A549 (cell line): ENCODE measurements at regions of chr17 and their contacts with region 1.

Region 1: DNA sequence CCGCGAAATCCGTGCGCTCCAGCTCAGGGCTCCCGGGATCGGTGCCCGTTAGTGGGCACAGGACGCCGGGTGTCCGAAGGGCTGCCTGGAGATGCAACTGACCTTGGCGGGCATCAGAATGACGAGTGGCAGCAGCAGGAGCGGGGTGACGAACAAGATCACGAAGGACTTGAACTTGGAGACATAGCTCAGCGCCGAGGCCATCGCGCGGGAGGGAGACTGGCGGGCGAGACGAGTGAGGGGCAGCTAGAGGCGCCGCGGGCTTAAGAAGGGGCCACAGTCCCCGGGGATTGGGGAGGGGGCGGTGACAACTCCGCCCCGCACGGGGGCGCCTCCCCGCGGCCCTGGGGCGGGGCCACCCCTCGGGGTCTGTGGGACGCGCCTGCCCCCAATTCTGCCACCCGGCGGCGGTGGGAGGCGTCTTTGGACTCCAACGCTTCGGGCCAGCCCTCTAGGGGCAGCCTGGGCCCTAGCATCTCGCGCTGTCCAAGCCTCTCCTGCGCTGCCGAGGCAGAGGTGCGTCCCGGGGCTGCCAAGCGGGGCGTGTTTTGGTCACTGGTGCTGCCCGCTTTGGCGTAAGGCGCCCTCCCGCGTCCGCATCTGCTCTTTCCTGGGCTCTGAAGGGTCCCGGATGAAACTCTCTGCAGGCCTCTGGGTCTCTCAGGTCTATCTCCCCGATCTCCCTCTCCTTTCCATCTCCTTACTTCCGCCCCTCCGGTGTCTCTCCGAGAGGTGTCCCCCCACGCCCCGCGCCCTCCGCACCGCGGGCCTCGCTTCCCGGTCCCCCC is at the start of gene SLC13A5:
- DNase-seq: peak; percentile 80 to 85
- ATAC-seq: peak; percentile 91 to 98
- H3K4me3 ChIP-seq: peak within 1 kb of the TSS; percentile 58
- H3K27ac ChIP-seq: peak within 1 kb of the TSS; percentile 54 to 74
- H3K4me1 ChIP-seq: 0 out of 3 replicates have a peak, but pooled peaks cover 3% of the 10 kb centered on the region
- CTCF ChIP-seq: peak; percentile 60
- EP300 ChIP-seq: no peak
- POLR2A ChIP-seq: no peak
- RAD21 ChIP-seq: peak in 1 of 2 experiments; percentile 37; a peak in 3 of 5 replicates
- polyA plus RNA-seq, gene SLC13A5: 0.26 and 0.30 TPM in 2 replicates

Region 2: DNA sequence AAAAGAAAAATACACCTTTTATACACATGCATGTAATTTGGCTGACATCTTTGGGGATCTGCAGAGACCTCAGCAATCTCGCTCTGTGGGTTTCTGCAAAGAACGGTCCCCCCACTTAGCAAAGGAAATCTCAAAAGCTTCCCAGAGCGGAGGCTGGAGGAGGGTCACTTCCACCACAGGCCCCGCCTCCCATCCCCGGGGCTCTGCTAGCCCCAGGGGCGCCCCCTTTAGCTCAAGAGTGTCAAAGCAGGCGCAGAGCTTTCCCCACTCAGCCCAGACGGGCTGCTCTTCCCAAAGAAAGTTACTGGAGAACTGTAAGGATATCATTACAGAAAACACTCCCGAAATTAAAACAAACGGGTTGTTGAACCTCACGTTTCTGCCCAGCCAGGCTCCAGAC is 11.6 kb before region 1 on chr17:
- CTCF ChIA-PET with region 1: interaction called, 31 read pairs
- POLR2A ChIA-PET with region 1: interaction called, 3 read pairs
- DNase-seq: peak; percentile 50 to 72
- ATAC-seq: peak; percentile 73 to 94; a peak in 5 of 6 replicates
- H3K4me3 ChIP-seq: no peak overlapping the region
- H3K27ac ChIP-seq: no peak overlapping the region
- H3K4me1 ChIP-seq: no peaks in the 10 kb centered on the region
- CTCF ChIP-seq: peak; percentile 32; the same call in 2 of the 3 replicates
- EP300 ChIP-seq: no peak
- POLR2A ChIP-seq: no peak
- RAD21 ChIP-seq: peak in 1 of 2 experiments; percentile 22; a peak in 1 of 5 replicates

Region 3: DNA sequence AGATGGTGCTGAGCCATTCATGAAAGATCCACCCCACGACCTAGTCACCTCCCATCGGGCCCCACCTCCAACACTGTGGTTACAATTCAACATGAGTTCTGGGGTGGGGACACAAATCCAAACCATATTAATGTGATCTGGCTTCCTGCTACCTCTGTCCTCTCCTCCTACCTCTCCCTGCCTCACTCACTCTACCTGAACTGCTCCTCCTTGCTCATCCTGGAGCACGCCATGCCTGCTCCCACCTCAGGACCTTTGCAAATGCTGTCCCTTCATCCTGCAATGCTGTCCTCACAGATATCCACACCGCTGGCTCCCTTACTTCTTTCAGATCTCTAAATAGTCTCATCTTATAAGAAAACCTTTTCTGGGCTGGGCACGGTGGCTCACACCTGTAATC is 10.7 kb after region 1 on chr17:
- CTCF ChIA-PET with region 1: no interaction called
- POLR2A ChIA-PET with region 1: no interaction called
- DNase-seq: no peak
- ATAC-seq: no peak
- H3K4me3 ChIP-seq: no peak overlapping the region
- H3K27ac ChIP-seq: no peak overlapping the region
- H3K4me1 ChIP-seq: no peaks in the 10 kb centered on the region
- CTCF ChIP-seq: no peak
- EP300 ChIP-seq: no peak
- POLR2A ChIP-seq: no peak
- RAD21 ChIP-seq: no peak

Region 4: GRCh38 chr17:6831661-6832263 is 118.4 kb after region 1 on chr17 and contains the start of gene TEKT1:
- CTCF ChIA-PET with region 1: no interaction called
- POLR2A ChIA-PET with region 1: no interaction called
- DNase-seq: peak; percentile 81 to 86
- ATAC-seq: peak; percentile 93 to 95
- H3K4me3 ChIP-seq: peak within 1 kb of the TSS; percentile 47
- H3K27ac ChIP-seq: peak within 1 kb of the TSS in 1 of 2 experiments; percentile 50; a peak in 2 of 6 replicates
- H3K4me1 ChIP-seq: peaks cover 11% of the 10 kb centered on the region; the same call in 2 of the 3 replicates
- CTCF ChIP-seq: no peak
- EP300 ChIP-seq: no peak
- POLR2A ChIP-seq: no peak
- RAD21 ChIP-seq: no peak
- polyA plus RNA-seq, gene TEKT1: not detected in 2 replicates